ENCODE measurements at regions of chr17 and their contacts with region 1.

Region 1: DNA sequence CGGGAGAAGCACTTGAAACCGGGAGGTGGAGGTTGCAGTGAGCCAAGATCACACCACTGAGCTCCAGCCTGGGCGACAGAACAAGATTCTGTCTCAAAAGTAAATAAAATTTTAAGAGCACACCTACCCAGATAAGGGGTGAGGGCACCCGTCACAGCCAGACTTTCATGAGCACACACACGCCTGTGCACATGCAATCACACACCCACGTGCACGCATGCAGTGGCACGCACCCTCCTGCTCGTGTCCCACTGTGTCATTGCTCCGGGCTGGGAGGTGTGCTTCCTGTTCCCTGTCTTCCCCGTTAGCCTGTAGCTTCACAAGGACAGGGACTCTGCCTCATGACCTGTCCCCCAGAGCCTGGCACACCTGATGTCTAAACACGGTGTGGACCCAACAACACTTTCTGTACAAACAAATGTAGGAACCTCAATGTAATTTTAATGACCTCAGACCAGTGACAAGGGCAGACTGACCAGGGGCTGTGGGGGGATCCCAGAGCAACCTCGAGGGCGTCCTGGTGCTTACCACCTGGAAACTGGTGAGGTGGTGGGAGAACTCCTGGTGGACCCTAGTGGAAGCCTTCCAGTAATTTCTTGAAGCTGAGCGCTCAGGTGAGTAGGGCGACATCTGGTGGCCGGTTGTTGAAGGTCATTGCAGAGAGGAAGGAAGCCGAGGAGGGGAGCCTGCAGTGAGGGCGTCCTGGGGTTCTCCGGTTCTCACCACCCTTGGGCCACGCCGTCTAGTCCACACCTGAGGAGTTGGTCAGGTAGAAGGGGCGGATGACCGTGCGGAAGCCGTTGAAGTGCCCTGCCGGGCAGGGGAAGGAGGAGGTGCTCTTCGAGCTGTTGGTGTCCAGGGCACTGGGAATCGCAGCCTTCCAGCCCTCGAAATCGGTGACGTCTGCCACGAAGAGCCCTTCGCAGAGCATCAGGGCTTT is 8.6 kb downstream of the LGALS3BP start:
- DNase-seq: peak; percentile 45 to 81 (median 64)
- H3K4me3 ChIP-seq: no peak overlapping the region
- H3K4me3 Mint-ChIP-seq: no peak overlapping the region
- H3K27ac ChIP-seq: no peak overlapping the region
- H3K27ac Mint-ChIP-seq: peak overlapping the region in 3 of 8 donors; percentile 60 to 78 (median 68)
- H3K4me1 ChIP-seq: peaks cover 9% of the 10 kb centered on the region
- H3K4me1 Mint-ChIP-seq: peaks cover 5 to 6% (median 6%) of the 10 kb centered on the region in 3 donors
- H3K27me3 ChIP-seq: no peaks in the 10 kb centered on the region
- H3K27me3 Mint-ChIP-seq: no peaks in the 10 kb centered on the region

Region 2: GRCh38 chr17:78865682-78866390 is 105.3 kb before region 1 on chr17:
- CTCF ChIA-PET with region 1: interaction called, 21 read pairs
- POLR2A ChIA-PET with region 1: no interaction called
- DNase-seq: peak; percentile 32 to 71 (median 51)
- H3K4me3 ChIP-seq: no peak overlapping the region
- H3K4me3 Mint-ChIP-seq: peak overlapping the region in 1 of 7 donors; percentile 40
- H3K27ac ChIP-seq: no peak overlapping the region
- H3K27ac Mint-ChIP-seq: no peak overlapping the region
- H3K4me1 ChIP-seq: peaks cover 5% of the 10 kb centered on the region
- H3K4me1 Mint-ChIP-seq: peaks cover 0 to 3% (median 0%) of the 10 kb centered on the region in 3 donors
- H3K27me3 ChIP-seq: no peaks in the 10 kb centered on the region
- H3K27me3 Mint-ChIP-seq: peaks cover 17 to 20% of the 10 kb centered on the region in 2 donors

Region 3: DNA sequence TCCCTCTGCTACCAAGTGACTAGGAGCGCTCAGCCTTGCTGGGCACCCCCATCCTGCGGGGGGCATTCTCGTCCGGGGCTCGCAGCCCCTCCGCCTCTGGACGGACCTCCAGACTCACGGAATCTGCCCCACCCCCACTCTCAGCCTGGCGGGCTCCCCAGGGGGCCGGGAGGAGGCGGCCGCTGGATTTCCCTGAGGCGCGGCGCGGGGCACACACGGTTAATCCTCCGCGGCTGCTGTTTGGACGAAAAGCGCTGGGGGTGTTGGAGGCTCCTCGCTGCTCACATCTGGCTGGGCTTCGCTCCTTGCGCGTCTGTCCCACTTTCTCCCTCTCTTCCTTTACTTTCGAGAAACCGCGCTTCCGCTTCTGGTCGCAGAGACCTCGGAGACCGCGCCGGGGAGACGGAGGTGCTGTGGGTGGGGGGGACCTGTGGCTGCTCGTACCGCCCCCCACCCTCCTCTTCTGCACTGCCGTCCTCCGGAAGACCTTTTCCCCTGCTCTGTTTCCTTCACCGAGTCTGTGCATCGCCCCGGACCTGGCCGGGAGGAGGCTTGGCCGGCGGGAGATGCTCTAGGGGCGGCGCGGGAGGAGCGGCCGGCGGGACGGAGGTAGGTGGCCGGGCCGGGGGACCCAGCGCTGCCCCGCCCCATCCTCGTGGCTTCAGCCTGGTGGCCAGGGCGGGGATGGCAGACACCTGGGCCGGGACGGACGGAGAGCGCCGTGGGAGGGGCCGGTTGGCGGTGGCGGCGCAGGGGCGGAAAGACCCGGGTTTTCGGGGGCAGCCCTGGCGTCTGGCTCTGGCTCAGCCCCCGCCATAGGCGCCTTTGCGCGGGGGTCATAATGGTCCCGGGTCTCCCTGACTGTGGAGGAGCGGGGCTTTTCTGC is 53.0 kb after region 1 on chr17 and contains the start of gene C1QTNF1:
- CTCF ChIA-PET with region 1: no interaction called
- POLR2A ChIA-PET with region 1: no interaction called
- DNase-seq: peak; percentile 18 to 62 (median 35)
- H3K4me3 ChIP-seq: peak within 1 kb of the TSS; percentile 51
- H3K4me3 Mint-ChIP-seq: peak within 1 kb of the TSS; percentile 83 to 93 (median 88)
- H3K27ac ChIP-seq: no peak within 1 kb of the TSS
- H3K27ac Mint-ChIP-seq: peak within 1 kb of the TSS in 6 of 8 donors; percentile 19 to 54 (median 46)
- H3K4me1 ChIP-seq: peaks cover 4% of the 10 kb centered on the region
- H3K4me1 Mint-ChIP-seq: peaks cover 8 to 12% (median 9%) of the 10 kb centered on the region in 3 donors
- H3K27me3 ChIP-seq: peaks cover 11% of the 10 kb centered on the region
- H3K27me3 Mint-ChIP-seq: peaks cover 14 to 46% of the 10 kb centered on the region in 2 donors
- total RNA-seq, gene C1QTNF1: 0.22 TPM in 1 of 2 experiments, not detected in the other

Region 4: GRCh38 chr17:79057737-79058385 is 86.8 kb after region 1 on chr17:
- CTCF ChIA-PET with region 1: no interaction called
- POLR2A ChIA-PET with region 1: no interaction called
- DNase-seq: no peak
- H3K4me3 ChIP-seq: no peak overlapping the region
- H3K4me3 Mint-ChIP-seq: no peak overlapping the region
- H3K27ac ChIP-seq: no peak overlapping the region
- H3K27ac Mint-ChIP-seq: peak overlapping the region in 1 of 8 donors; percentile 55
- H3K4me1 ChIP-seq: no peaks in the 10 kb centered on the region
- H3K4me1 Mint-ChIP-seq: no peaks in the 10 kb centered on the region
- H3K27me3 ChIP-seq: no peaks in the 10 kb centered on the region
- H3K27me3 Mint-ChIP-seq: peaks cover 24 to 30% of the 10 kb centered on the region in 2 donors

Measured in CD8-positive, alpha-beta memory T cell (primary cell).